Caco-2 (cell line): ENCODE measurements at regions of chr20 and their contacts with region 1.

Region 1: GRCh38 chr20:49054056-49054643 is 8.0 kb downstream of the CSE1L start:
- DNase-seq: no peak
- H3K4me3 ChIP-seq: no peak overlapping the region
- H3K4me3 Mint-ChIP-seq: no peak overlapping the region
- H3K27ac Mint-ChIP-seq: no peak overlapping the region
- H3K4me1 ChIP-seq: peaks cover 27% of the 10 kb centered on the region
- H3K4me1 Mint-ChIP-seq: peaks cover 17% of the 10 kb centered on the region
- H3K27me3 ChIP-seq: no peaks in the 10 kb centered on the region
- H3K27me3 Mint-ChIP-seq: no peaks in the 10 kb centered on the region
- CTCF ChIP-seq: no peak

Region 2: DNA sequence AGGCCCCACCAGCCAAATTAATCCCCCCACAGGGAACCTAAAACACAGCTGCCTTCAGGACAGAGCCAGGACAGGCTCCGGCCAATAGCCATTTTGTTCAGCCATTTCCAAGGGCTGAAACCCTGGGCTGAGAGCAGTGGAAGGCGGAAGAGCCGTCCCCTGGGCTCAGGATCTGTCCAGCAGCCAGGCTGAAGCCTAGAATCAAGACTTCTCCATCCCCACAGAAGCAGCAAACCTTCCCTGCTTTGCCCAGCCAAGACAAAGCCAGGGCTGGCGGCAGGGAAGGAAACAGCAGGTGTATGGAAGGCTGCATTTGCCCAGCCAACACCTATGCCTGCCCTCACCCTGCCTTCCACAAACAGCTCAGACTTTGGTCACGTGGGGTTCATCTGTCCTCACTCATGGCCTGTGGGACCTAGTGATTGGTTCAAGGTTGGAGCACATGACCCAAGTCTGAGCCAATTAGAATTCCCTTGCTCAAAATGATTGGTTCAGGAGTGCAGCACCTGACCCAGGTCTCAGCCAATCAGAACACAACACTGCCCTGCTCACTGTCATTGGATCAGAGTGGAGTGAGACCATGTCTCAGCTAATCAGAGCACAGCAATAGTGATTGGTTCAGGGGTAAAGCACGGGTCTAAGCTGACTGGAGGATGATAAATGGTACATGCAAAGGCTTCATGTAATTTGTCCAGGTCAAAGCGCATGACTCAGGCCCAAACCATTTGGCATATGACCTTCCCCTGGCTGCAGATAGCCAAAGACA is 328.7 kb before region 1 on chr20:
- CTCF ChIA-PET with region 1: no interaction called
- POLR2A ChIA-PET with region 1: interaction called, 10 read pairs
- intact Hi-C with region 1: no loop called
- DNase-seq: peak; percentile 74 to 85
- H3K4me3 ChIP-seq: no peak overlapping the region
- H3K4me3 Mint-ChIP-seq: no peak overlapping the region
- H3K27ac Mint-ChIP-seq: peak overlapping the region; percentile 14
- H3K4me1 ChIP-seq: peaks cover 5% of the 10 kb centered on the region; the same call in 1 of the 2 replicates
- H3K4me1 Mint-ChIP-seq: peaks cover 8% of the 10 kb centered on the region
- H3K27me3 ChIP-seq: no peaks in the 10 kb centered on the region
- H3K27me3 Mint-ChIP-seq: no peaks in the 10 kb centered on the region
- CTCF ChIP-seq: no peak

Region 3: GRCh38 chr20:48999890-49000870 is 54.0 kb before region 1 on chr20:
- CTCF ChIA-PET with region 1: no interaction called
- POLR2A ChIA-PET with region 1: no interaction called
- intact Hi-C with region 1: no loop called
- DNase-seq: no peak
- H3K4me3 ChIP-seq: no peak overlapping the region
- H3K4me3 Mint-ChIP-seq: no peak overlapping the region
- H3K27ac Mint-ChIP-seq: no peak overlapping the region
- H3K4me1 ChIP-seq: no peaks in the 10 kb centered on the region
- H3K4me1 Mint-ChIP-seq: no peaks in the 10 kb centered on the region
- H3K27me3 ChIP-seq: no peaks in the 10 kb centered on the region
- H3K27me3 Mint-ChIP-seq: no peaks in the 10 kb centered on the region
- CTCF ChIP-seq: no peak

Region 4: DNA sequence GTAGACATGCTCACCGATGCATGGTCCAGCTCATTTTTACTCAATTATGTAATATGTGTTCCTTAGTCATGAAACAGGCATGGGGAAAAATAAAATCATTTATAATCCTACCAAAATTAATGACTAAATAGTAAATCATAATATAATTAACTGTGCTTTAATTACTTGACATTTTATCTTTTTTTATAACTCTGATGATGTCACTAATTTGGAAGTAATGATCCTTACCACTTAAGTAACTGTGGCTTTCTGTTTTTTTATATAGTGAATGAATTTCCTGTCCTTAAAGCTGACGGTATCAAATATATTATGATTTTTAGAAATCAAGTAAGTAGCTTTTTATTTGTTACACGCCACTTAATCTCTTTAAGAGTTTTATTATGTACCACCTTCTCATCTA is 24.1 kb after region 1 on chr20:
- CTCF ChIA-PET with region 1: no interaction called
- POLR2A ChIA-PET with region 1: no interaction called
- intact Hi-C with region 1: no loop called
- DNase-seq: no peak
- H3K4me3 ChIP-seq: no peak overlapping the region
- H3K4me3 Mint-ChIP-seq: no peak overlapping the region
- H3K27ac Mint-ChIP-seq: no peak overlapping the region
- H3K4me1 ChIP-seq: no peaks in the 10 kb centered on the region
- H3K4me1 Mint-ChIP-seq: no peaks in the 10 kb centered on the region
- H3K27me3 ChIP-seq: no peaks in the 10 kb centered on the region
- H3K27me3 Mint-ChIP-seq: no peaks in the 10 kb centered on the region
- CTCF ChIP-seq: no peak